ENCODE measurements at regions of chr6 and their contacts with region 1.

Region 1: GRCh38 chr6:7051233-7052114 is 56.3 kb upstream of the RREB1 start:
- DNase-seq: peak; percentile 60
- ATAC-seq: peak; percentile 65
- H3K4me3 Mint-ChIP-seq: no peak overlapping the region
- H3K27ac Mint-ChIP-seq: no peak overlapping the region
- H3K4me1 Mint-ChIP-seq: peaks cover 6% of the 10 kb centered on the region
- H3K27me3 Mint-ChIP-seq: peaks cover 16% of the 10 kb centered on the region

Region 2: GRCh38 chr6:6969761-6970223 is 81.7 kb before region 1 on chr6:
- CTCF ChIA-PET with region 1: no interaction called
- POLR2A ChIA-PET with region 1: no interaction called
- intact Hi-C with region 1: no loop called
- DNase-seq: no peak
- ATAC-seq: no peak
- H3K4me3 Mint-ChIP-seq: no peak overlapping the region
- H3K27ac Mint-ChIP-seq: no peak overlapping the region
- H3K4me1 Mint-ChIP-seq: no peaks in the 10 kb centered on the region
- H3K27me3 Mint-ChIP-seq: no peaks in the 10 kb centered on the region

Region 3: DNA sequence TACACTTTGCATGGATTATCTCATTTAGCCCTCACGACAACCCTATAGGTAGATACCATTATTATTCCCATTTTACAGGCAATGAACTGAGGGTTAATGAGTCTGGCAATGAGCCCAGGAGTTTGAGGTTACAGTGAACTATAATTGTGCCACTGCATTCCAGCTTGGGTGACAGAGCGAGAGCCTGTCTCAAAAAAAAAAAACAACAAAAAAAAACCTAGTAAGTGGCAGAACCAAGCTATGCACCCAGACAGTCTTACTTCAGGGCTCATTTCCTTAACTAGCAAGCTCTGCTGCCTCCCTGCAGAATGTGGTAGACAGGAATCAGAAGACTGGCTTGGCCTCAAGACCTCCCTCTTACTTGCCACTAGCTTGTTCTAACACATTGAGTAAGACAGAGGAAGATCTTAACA is 15.6 kb before region 1 on chr6:
- CTCF ChIA-PET with region 1: no interaction called
- POLR2A ChIA-PET with region 1: no interaction called
- intact Hi-C with region 1: no loop called
- DNase-seq: no peak
- ATAC-seq: no peak
- H3K4me3 Mint-ChIP-seq: no peak overlapping the region
- H3K27ac Mint-ChIP-seq: no peak overlapping the region
- H3K4me1 Mint-ChIP-seq: no peaks in the 10 kb centered on the region
- H3K27me3 Mint-ChIP-seq: peaks cover 10% of the 10 kb centered on the region

Region 4: GRCh38 chr6:7292596-7293255 is 241.3 kb after region 1 on chr6:
- CTCF ChIA-PET with region 1: no interaction called
- POLR2A ChIA-PET with region 1: no interaction called
- intact Hi-C with region 1: no loop called
- DNase-seq: no peak
- ATAC-seq: no peak
- H3K4me3 Mint-ChIP-seq: no peak overlapping the region
- H3K27ac Mint-ChIP-seq: no peak overlapping the region
- H3K4me1 Mint-ChIP-seq: peaks cover 7% of the 10 kb centered on the region
- H3K27me3 Mint-ChIP-seq: no peaks in the 10 kb centered on the region

Region 5: DNA sequence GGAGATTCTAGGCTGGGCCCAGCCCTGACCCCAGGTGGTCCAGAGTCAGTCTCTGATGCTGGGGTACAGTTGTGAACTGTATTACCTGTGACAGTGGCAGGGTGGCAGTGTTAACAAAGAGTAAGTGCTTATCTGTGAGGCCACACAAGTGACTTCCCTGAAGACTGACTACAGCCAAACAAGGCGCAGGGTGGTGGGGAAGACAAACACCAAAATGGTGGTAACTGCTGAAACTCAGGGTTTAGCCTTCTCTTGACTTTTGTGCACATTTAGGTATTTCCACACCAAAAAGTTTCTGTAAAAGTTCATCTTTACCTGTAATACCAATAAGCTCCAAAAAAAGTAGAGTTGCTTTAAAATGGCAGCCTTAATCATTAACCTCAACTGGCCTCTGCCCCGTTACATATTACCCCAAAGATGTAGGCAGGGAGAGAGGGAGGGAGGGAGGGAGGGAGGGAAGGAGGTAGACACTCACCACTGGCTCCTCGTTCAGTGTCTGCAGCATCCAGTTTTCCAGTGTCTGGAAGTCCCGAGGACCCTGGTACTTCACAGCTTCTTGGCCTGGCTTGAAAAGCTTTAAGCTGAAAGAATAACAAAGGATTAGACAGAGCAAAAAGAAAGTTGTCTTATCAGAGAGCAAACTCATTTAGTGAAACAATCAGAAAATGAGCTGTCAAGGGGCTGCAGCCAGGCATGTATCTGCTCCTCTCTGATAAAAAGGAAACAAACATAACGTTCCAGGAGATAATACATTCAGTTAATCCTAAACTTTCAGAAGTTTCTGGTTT is 847.8 kb after region 1 on chr6:
- CTCF ChIA-PET with region 1: no interaction called
- POLR2A ChIA-PET with region 1: interaction called, 20 read pairs
- intact Hi-C with region 1: no loop called
- DNase-seq: no peak
- ATAC-seq: peak; percentile 47
- H3K4me3 Mint-ChIP-seq: no peak overlapping the region
- H3K27ac Mint-ChIP-seq: no peak overlapping the region
- H3K4me1 Mint-ChIP-seq: no peaks in the 10 kb centered on the region
- H3K27me3 Mint-ChIP-seq: no peaks in the 10 kb centered on the region

Region 6: DNA sequence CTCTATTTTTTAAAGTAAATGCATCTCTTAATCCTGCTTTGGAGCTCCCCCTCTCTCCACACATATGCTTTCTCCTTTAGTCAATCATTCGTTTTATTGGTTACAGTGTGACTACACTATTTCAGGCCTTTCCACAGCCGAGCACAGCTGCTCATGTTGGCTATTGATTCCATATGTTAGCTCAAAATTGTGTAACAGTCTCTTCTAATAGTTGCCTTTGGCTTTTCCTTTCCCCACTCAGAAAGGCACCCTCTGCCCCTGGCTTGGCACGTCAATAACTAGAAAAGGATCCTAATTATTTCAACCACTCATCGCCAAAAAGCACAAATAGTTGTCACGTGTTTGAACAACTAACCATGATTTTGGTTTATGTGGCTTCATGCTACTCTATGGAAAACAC is 1794.2 kb after region 1 on chr6:
- CTCF ChIA-PET with region 1: no interaction called
- POLR2A ChIA-PET with region 1: no interaction called
- intact Hi-C with region 1: no loop called
- DNase-seq: no peak
- ATAC-seq: no peak
- H3K4me3 Mint-ChIP-seq: no peak overlapping the region
- H3K27ac Mint-ChIP-seq: no peak overlapping the region
- H3K4me1 Mint-ChIP-seq: no peaks in the 10 kb centered on the region
- H3K27me3 Mint-ChIP-seq: no peaks in the 10 kb centered on the region

Measured in activated CD4-positive, alpha-beta T cell treated with anti-CD3 and anti-CD28 coated beads for 36 hours (primary cell).